Motor neuron (in vitro differentiated cells): ENCODE measurements at regions of chr12 and their contacts with region 1.

Region 1: GRCh38 chr12:46372544-46373110 is at the start of gene SLC38A2:
- ATAC-seq: peak; percentile 75 to 84 (median 80)
- H3K4me3 ChIP-seq: peak within 1 kb of the TSS; percentile 76 to 91 (median 87)
- H3K27ac ChIP-seq: peak within 1 kb of the TSS; percentile 93 to 95
- H3K4me1 ChIP-seq: peaks cover 14 to 19% of the 10 kb centered on the region in 2 donors
- total RNA-seq, gene SLC38A2: 67.2 to 381 (median 117) TPM

Region 2: DNA sequence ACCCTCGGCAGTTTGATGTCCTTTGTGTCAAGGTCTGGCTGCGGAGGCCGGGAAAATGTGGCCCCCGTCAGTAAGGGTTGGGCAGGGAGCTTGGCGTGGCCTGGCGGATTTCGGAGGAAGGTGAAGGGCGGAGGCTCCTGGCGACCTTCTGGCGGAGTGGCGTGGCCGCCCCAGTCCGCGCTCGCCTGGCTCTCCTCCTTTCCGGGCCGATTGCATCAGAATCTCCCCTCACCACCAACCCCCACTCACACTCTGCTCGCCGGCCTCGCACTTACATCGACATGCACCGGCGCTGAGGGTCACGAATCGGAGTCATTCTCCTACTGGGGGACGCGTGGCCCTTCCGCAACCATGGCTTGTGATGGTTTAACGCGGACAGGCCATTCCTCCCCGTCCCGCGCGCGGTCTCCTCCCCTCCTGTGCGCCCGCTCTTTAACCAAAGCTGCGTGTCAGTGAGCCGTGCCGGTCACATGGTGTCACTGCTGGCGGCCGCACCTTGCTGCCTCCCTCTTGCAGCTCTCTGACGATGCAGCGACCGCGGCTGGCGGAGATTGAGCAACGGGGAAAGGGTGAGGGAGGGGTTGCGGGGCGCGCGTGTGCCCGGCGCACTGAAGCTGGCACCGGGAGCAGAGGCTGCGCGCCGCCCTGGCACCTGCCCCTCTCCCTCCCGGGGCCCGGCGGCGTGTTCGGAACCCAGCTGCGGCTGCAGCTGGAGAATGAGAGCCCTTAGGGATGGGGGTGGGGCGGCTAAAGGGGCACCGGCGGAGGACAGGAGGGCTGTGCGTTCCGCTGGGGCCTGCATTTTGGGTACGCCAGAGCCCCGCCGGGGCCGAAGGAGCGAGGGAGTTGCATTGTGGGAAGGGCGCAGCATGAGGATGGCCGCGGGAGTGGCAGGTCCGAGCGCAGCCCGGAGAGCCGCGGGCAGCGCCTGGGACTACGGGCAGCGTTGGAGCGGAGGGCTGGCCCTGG is 103.8 kb before region 1 on chr12 and contains the start of gene SLC38A1:
- in situ Hi-C with region 1: loop called in 2 of 9 experiments (anchors 25 kb)
- ATAC-seq: peak; percentile 71 to 87 (median 83)
- H3K4me3 ChIP-seq: peak within 1 kb of the TSS; percentile 65 to 93 (median 80)
- H3K27ac ChIP-seq: peak within 1 kb of the TSS; percentile 79 to 96
- H3K4me1 ChIP-seq: peaks cover 16 to 28% of the 10 kb centered on the region in 2 donors
- total RNA-seq, gene SLC38A1: 49.9 to 126 (median 83.0) TPM